OCI-LY7 (cell line): ENCODE measurements at regions of chr13 and their contacts with region 1.

Region 1: GRCh38 chr13:86689911-86690310 is 890.7 kb upstream of the SLITRK6 start:
- DNase-seq: no peak
- H3K4me3 ChIP-seq: no peak overlapping the region
- H3K27ac ChIP-seq: no peak overlapping the region
- H3K4me1 ChIP-seq: no peaks in the 10 kb centered on the region
- CTCF ChIP-seq: no peak

Region 2: DNA sequence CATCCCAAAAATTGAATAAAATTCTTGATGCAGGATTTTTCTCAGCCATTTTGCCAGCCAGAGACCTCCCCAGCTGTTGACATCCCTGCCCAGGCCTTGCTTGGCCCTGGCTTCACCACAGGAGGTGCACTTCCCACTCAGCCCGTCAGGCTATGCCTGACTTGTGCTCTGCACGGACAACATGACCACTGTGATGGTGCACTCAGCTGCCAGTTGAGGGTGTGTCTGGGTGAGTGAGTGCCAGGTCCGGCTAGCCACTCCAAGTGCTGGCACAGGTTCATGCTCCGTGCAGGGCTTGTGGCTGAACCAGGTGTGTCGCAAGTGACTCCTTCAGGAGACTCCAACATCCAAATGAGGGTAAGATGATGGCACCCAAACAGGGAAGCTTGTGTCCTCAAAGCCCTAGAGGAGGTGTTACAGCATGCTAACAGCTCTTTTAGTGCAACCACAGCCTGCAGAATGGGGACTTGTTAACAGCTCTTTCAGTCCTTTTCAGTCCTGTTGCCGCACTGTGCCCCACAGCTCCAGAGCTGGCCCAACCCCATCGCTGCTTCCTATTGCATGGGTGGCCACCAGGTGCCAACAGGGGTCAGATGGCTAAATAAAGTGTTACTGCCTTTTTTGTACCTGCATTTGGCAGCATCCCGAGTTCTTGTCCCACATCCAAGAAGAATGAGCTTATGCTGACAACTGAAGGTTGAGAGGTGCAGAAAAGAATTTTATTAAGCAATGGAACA is 1362.0 kb after region 1 on chr13:
- CTCF ChIA-PET with region 1: no interaction called
- POLR2A ChIA-PET with region 1: no interaction called
- intact Hi-C with region 1: loop called (anchors 5 kb)
- DNase-seq: no peak
- H3K4me3 ChIP-seq: no peak overlapping the region
- H3K27ac ChIP-seq: no peak overlapping the region
- H3K4me1 ChIP-seq: no peaks in the 10 kb centered on the region
- CTCF ChIP-seq: no peak